Prostate gland (tissue), 2 donors: ENCODE measurements at regions of chr16 and their contacts with region 1.

Region 1: DNA sequence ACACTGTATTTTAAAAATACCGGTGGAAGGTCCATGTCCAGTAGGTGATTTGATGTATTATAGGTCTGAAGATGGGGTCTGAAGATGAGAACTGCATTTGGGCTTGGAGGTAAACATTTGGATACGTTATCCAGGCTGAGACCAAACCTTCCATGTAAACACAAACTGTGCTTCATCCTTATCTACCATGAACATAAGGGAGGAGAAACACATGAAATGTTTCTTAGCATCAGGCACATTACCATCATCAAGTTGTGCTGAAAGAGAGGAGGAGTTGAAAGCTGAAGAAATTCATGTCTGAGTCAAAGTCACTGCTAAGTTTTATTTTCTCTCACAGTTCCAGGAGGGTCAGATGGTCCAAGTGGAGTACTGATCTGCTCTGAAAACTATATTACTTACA is 11.4 kb downstream of the SF3B3 start:
- DNase-seq: no peak
- H3K4me3 ChIP-seq: no peak overlapping the region
- H3K27ac ChIP-seq: no peak overlapping the region
- H3K4me1 ChIP-seq: no peaks in the 10 kb centered on the region
- H3K27me3 ChIP-seq: no peaks in the 10 kb centered on the region
- CTCF ChIP-seq: no peak
- POLR2A ChIP-seq: no peak

Region 2: DNA sequence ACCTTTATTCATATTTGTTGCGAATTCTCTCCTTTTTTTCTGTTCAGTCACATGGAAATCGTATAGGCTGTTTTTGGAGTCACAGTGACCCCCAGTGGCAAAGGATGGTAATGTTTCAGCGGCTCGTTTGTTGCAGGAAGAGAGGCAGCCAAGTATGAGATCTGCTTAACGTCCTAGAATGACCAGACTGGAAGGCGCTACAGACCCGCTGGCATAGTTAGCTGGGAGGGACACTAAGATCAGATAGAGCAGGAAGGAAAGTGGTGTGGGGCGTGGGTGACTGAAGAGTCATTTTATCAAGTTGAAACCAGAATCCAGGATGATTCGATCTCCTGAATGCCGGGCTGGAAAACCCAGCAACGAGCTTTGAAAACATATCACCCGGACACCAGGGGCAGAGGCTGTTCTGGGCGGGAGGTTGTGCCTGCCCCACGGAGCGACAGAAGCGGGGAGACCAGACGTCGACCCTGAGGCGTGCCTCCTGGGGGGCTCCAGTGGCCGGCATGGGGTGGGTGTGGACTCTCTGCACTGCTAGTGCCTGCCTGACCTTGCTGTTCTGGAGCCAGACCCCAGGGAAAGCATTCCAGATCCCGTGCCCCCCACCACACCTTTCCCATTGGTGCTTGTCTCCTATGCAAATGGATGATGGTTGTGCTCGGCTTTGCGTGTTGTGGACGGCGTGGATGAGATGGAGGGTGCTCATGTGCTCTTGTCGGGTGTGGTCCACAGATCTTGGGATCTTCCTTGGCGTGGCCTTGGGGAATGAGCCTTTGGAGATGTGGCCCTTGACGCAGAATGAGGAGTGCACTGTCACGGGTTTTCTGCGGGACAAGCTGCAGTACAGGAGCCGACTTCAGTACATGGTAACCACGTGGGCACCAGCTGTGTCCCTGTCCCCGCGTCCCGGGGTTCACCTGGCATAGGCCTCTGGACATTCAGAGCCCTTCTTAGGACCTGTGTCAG is 119.1 kb after region 1 on chr16:
- intact Hi-C with region 1: loop called (anchors 5 kb)
- DNase-seq: peak; percentile 71
- H3K4me3 ChIP-seq: no peak overlapping the region
- H3K27ac ChIP-seq: no peak overlapping the region
- H3K4me1 ChIP-seq: no peaks in the 10 kb centered on the region
- H3K27me3 ChIP-seq: no peaks in the 10 kb centered on the region
- CTCF ChIP-seq: peak; percentile 71 to 93 (median 92)
- POLR2A ChIP-seq: no peak